CD4-positive, alpha-beta T cell (primary cell): ENCODE measurements at regions of chr2 and their contacts with region 1.

Region 1: DNA sequence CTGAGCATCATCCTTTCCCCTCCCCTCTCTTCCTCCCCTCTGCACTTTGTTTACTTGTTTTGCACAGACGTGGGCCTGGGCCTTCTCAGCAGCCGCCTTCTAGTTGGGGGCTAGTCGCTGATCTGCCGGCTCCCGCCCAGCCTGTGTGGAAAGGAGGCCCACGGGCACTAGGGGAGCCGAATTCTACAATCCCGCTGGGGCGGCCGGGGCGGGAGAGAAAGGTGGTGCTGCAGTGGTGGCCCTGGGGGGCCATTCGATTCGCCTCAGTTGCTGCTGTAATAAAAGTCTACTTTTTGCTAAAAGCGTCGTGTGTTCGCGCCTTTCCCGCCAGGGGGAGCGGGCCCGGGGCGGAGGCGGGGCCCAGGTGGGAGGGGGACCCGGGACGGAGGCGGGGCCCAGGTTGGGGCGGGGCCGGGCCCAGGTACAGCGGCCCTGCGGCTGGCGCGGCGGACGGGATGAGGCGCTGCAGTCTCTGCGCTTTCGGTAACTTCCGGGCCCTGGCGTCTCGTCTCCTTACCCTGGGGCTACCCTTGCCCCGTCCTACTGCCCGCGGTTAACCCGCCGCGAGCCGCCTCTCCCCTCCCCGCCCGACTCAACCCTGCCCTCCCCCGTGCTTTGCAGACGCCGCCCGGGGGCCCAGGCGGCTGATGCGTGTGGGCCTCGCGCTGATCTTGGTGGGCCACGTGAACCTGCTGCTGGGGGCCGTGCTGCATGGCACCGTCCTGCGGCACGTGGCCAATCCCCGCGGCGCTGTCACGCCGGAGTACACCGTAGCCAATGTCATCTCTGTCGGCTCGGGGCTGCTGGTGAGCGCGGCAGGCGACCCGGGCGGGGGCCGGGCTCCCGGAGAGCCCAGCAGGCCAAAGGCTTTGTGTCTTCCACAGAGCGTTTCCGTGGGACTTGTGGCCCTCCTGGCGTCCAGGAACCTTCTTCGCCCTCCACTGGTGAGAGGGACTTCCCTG is at the start of gene KRTCAP3:
- DNase-seq: peak; percentile 45 to 77 (median 60)
- ATAC-seq: peak; percentile 96
- H3K4me3 ChIP-seq: no peak within 1 kb of the TSS
- H3K4me3 Mint-ChIP-seq: peak within 1 kb of the TSS; percentile 5
- H3K27ac ChIP-seq: no peak within 1 kb of the TSS
- H3K27ac Mint-ChIP-seq: peak within 1 kb of the TSS; percentile 61
- H3K4me1 ChIP-seq: peaks cover 8% of the 10 kb centered on the region
- H3K4me1 Mint-ChIP-seq: peaks cover 20% of the 10 kb centered on the region
- H3K27me3 ChIP-seq: no peaks in the 10 kb centered on the region
- H3K27me3 Mint-ChIP-seq: no peaks in the 10 kb centered on the region
- CTCF ChIP-seq: peak; percentile 37
- total RNA-seq, gene KRTCAP3: 11.5 to 12.8 TPM

Region 2: GRCh38 chr2:27400348-27401135 is 41.7 kb before region 1 on chr2:
- CTCF ChIA-PET with region 1: no interaction called
- POLR2A ChIA-PET with region 1: no interaction called
- intact Hi-C with region 1: no loop called
- DNase-seq: no peak
- ATAC-seq: no peak
- H3K4me3 ChIP-seq: no peak overlapping the region
- H3K4me3 Mint-ChIP-seq: no peak overlapping the region
- H3K27ac ChIP-seq: no peak overlapping the region
- H3K27ac Mint-ChIP-seq: peak overlapping the region; percentile 42
- H3K4me1 ChIP-seq: peaks cover 15% of the 10 kb centered on the region
- H3K4me1 Mint-ChIP-seq: peaks cover 49% of the 10 kb centered on the region
- H3K27me3 ChIP-seq: no peaks in the 10 kb centered on the region
- H3K27me3 Mint-ChIP-seq: no peaks in the 10 kb centered on the region
- CTCF ChIP-seq: no peak

Region 3: GRCh38 chr2:27489498-27490397 is 47.5 kb after region 1 on chr2 and contains the start of gene IFT172:
- CTCF ChIA-PET with region 1: no interaction called
- POLR2A ChIA-PET with region 1: no interaction called
- intact Hi-C with region 1: loop called (anchors 1 to 5 kb)
- DNase-seq: peak; percentile 97 to 100 (median 99)
- ATAC-seq: peak; percentile 85
- H3K4me3 ChIP-seq: peak within 1 kb of the TSS; percentile 61
- H3K4me3 Mint-ChIP-seq: peak within 1 kb of the TSS; percentile 80
- H3K27ac ChIP-seq: peak within 1 kb of the TSS; percentile 55 to 91
- H3K27ac Mint-ChIP-seq: peak within 1 kb of the TSS; percentile 93
- H3K4me1 ChIP-seq: peaks cover 20% of the 10 kb centered on the region
- H3K4me1 Mint-ChIP-seq: peaks cover 18% of the 10 kb centered on the region
- H3K27me3 ChIP-seq: peaks cover 11 to 13% of the 10 kb centered on the region in 2 experiments
- H3K27me3 Mint-ChIP-seq: peaks cover 12% of the 10 kb centered on the region
- CTCF ChIP-seq: no peak
- total RNA-seq, gene IFT172: 13.3 to 14.4 TPM